ENCODE measurements at regions of chrX and their contacts with region 1.

Region 1: GRCh38 chrX:139559383-139560042 is 29.0 kb downstream of the F9 start:
- DNase-seq: peak; percentile 10
- H3K4me3 ChIP-seq: no peak overlapping the region
- H3K27ac ChIP-seq: no peak overlapping the region
- H3K4me1 ChIP-seq: no peaks in the 10 kb centered on the region
- H3K27me3 ChIP-seq: no peaks in the 10 kb centered on the region
- CTCF ChIP-seq: peak; percentile 22 to 37 (median 33)
- EP300 ChIP-seq: no peak
- POLR2A ChIP-seq: no peak

Region 2: GRCh38 chrX:138756234-138756633 is 803.3 kb before region 1 on chrX:
- in situ Hi-C with region 1: loop called in 3 of 4 experiments (anchors 25 kb)
- intact Hi-C with region 1: no loop called
- DNase-seq: no peak
- H3K4me3 ChIP-seq: no peak overlapping the region
- H3K27ac ChIP-seq: no peak overlapping the region
- H3K4me1 ChIP-seq: no peaks in the 10 kb centered on the region
- H3K27me3 ChIP-seq: no peaks in the 10 kb centered on the region
- CTCF ChIP-seq: no peak
- EP300 ChIP-seq: no peak
- POLR2A ChIP-seq: no peak